Activated CD8-positive, alpha-beta T cell treated with anti-CD3 and anti-CD28 coated beads for 36 hours (primary cell): ENCODE measurements at regions of chr2 and their contacts with region 1.

Region 1: DNA sequence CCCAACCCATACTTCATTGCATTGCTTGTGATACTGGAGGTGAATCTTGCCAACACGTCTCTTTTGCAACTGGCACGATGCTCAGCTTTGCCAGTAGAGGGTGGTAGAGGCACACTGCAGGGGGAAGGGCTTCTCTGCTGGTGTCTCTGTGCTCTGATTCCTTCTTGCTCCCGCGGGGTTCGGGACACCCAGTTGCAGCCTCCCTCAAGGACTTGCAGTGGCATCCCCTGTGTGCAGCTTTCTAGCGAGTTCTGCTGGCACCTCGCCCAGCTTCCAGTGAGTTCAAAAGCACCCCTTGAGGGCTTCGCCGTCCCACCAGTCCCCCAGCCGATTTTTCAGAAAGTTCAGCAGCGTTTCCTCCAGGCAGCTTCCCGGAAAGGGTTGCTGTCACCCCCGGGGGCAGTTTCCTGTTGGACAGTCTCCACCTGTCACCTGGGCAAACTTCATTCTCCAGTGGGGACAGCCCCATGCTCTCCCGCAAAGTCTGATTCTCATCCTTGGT is 35.3 kb upstream of the EN1 start:
- DNase-seq: peak; percentile 67
- ATAC-seq: peak; percentile 88
- H3K4me3 Mint-ChIP-seq: peak overlapping the region; percentile 66
- H3K27ac Mint-ChIP-seq: no peak overlapping the region
- H3K4me1 Mint-ChIP-seq: peaks cover 18% of the 10 kb centered on the region
- H3K27me3 Mint-ChIP-seq: peaks cover 7% of the 10 kb centered on the region
- CTCF ChIP-seq: peak; percentile 81

Region 2: GRCh38 chr2:117856415-117857210 is 1026.1 kb before region 1 on chr2:
- CTCF ChIA-PET with region 1: no interaction called
- POLR2A ChIA-PET with region 1: no interaction called
- intact Hi-C with region 1: no loop called
- DNase-seq: no peak
- ATAC-seq: no peak
- H3K4me3 Mint-ChIP-seq: no peak overlapping the region
- H3K27ac Mint-ChIP-seq: no peak overlapping the region
- H3K4me1 Mint-ChIP-seq: no peaks in the 10 kb centered on the region
- H3K27me3 Mint-ChIP-seq: peaks cover 18% of the 10 kb centered on the region
- CTCF ChIP-seq: no peak

Region 3: GRCh38 chr2:118855451-118856279 is 27.1 kb before region 1 on chr2:
- CTCF ChIA-PET with region 1: interaction called, 10 read pairs
- POLR2A ChIA-PET with region 1: no interaction called
- intact Hi-C with region 1: no loop called
- DNase-seq: peak; percentile 86
- ATAC-seq: peak; percentile 95
- H3K4me3 Mint-ChIP-seq: peak overlapping the region; percentile 48
- H3K27ac Mint-ChIP-seq: no peak overlapping the region
- H3K4me1 Mint-ChIP-seq: peaks cover 23% of the 10 kb centered on the region
- H3K27me3 Mint-ChIP-seq: peaks cover 75% of the 10 kb centered on the region
- CTCF ChIP-seq: peak; percentile 96

Region 4: DNA sequence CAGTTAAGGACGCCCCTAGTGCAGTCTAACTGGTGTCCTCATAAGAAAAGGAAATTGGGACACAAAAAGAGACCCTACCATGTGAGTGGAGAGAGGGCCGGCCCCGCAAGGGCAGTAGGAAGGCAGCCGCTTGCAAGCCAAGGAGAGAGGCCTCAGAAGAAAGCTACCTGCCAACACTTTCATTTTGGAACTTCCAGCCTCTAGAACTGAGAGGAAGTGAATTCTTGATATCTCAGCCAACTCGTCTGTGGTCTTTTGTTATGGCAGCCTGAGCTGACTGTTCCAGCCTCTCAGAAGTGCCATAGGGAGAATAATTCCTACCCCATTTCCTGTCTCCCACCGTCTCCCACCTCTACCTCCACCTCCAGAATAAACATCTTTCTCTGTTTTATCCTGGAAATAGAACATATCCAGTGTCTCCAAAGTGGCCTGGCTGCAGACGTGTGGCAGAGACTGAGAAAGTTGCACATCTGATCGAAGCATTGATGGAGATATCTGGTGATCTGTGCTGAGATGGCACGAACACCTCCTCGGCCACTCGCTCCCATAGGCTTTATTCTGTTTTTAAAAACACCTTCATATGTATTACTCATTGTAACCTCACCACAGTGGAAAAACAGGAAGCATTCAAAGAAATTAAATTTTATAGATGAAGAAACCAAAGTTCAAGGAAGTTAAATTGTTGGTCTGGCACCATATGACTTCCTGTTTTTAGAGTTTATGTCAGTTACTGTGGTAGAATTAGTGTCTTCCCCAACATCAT is 19.7 kb after region 1 on chr2:
- CTCF ChIA-PET with region 1: interaction called, 20 read pairs
- POLR2A ChIA-PET with region 1: no interaction called
- intact Hi-C with region 1: no loop called
- DNase-seq: no peak
- ATAC-seq: peak; percentile 20
- H3K4me3 Mint-ChIP-seq: no peak overlapping the region
- H3K27ac Mint-ChIP-seq: peak overlapping the region; percentile 45
- H3K4me1 Mint-ChIP-seq: peaks cover 17% of the 10 kb centered on the region
- H3K27me3 Mint-ChIP-seq: no peaks in the 10 kb centered on the region
- CTCF ChIP-seq: no peak

Region 5: GRCh38 chr2:119174216-119175037 is 291.7 kb after region 1 on chr2:
- CTCF ChIA-PET with region 1: interaction called, 48 read pairs
- POLR2A ChIA-PET with region 1: no interaction called
- intact Hi-C with region 1: loop called (anchors 2 kb)
- DNase-seq: peak; percentile 62
- ATAC-seq: peak; percentile 56
- H3K4me3 Mint-ChIP-seq: no peak overlapping the region
- H3K27ac Mint-ChIP-seq: no peak overlapping the region
- H3K4me1 Mint-ChIP-seq: no peaks in the 10 kb centered on the region
- H3K27me3 Mint-ChIP-seq: no peaks in the 10 kb centered on the region
- CTCF ChIP-seq: peak; percentile 83

Region 6: GRCh38 chr2:119476301-119477021 is 593.7 kb after region 1 on chr2:
- CTCF ChIA-PET with region 1: interaction called, 15 read pairs
- POLR2A ChIA-PET with region 1: no interaction called
- intact Hi-C with region 1: no loop called
- DNase-seq: peak; percentile 52
- ATAC-seq: peak; percentile 86
- H3K4me3 Mint-ChIP-seq: no peak overlapping the region
- H3K27ac Mint-ChIP-seq: no peak overlapping the region
- H3K4me1 Mint-ChIP-seq: no peaks in the 10 kb centered on the region
- H3K27me3 Mint-ChIP-seq: peaks cover 6% of the 10 kb centered on the region
- CTCF ChIP-seq: peak; percentile 94